H1 (cell line): ENCODE measurements at regions of chr11 and their contacts with region 1.

Region 1: DNA sequence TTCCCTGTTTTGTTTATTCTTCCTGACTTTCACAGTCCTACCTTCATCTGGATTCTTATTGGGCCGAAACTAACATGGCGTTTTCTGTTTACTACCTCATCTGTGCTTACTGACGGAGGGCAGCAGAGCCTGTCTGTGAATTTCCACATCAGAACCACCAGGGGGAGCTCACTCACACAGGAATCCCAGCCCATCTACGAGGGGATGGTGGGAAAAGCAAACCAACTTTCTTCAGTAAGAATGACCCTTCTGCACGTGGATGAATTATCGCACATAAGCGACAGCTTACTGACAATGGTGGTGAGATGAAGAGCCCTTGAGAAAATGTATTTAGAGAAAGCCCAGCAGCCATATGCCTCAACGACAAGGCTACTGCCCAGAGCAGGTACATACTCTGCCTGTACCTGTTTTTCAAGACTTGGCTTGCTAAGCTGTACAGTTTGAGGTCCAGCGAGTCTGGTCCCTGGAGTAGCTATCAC is 42.5 kb downstream of the LARGE2 start:
- DNase-seq: peak; percentile 44 to 70
- H3K4me3 ChIP-seq: no peak overlapping the region
- H3K27ac ChIP-seq: no peak overlapping the region
- H3K4me1 ChIP-seq: peaks cover 0 to 3% (median 0%) of the 10 kb centered on the region in 4 experiments; a peak in 2 of 7 replicates
- H3K27me3 ChIP-seq: no peaks in the 10 kb centered on the region
- CTCF ChIP-seq: peak; percentile 78 to 93 (median 86)
- EP300 ChIP-seq: no peak
- POLR2A ChIP-seq: no peak
- RAD21 ChIP-seq: peak; percentile 88 to 91

Region 2: GRCh38 chr11:45834298-45834756 is 130.6 kb before region 1 on chr11:
- CTCF ChIA-PET with region 1: no interaction called
- POLR2A ChIA-PET with region 1: no interaction called
- DNase-seq: no peak
- H3K4me3 ChIP-seq: no peak overlapping the region
- H3K27ac ChIP-seq: no peak overlapping the region
- H3K4me1 ChIP-seq: no peaks in the 10 kb centered on the region
- H3K27me3 ChIP-seq: no peaks in the 10 kb centered on the region
- CTCF ChIP-seq: no peak
- EP300 ChIP-seq: no peak
- POLR2A ChIP-seq: no peak
- RAD21 ChIP-seq: no peak

Region 3: DNA sequence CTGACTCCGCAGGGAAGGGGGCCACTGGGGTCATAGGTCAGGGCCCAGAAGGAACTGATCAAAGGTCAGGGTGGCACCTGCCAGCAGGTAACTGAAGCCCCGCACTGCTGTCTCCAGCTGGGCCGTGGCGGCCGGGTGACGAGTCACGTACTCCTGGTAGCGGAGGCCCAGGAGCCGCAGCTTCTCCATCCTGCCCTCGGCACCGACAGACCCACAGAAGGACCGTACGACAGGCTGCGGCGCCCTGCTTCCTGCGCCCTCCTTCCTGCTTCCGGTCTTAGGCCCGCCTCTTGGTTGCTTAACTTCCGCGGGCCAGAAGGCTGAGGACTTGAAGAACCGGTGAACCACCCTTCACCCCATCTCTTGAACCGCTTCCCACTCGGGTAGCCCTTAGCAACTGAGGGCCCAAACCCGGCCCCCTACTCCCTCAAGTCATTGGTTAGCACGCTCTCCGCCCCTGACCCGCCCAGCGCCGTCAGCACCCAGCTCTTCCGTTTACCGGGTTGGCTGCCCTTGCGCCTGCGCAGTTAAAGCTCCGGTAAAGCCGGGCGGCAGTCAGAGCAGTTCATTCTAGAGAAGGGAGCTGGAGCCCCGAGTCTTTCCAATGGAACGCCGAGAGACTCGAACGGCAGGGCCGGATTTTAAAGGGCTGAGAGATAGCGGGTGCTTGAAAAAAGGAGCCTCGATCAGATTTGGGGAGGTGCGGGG is 47.2 kb before region 1 on chr11 and contains the start of gene PEX16:
- CTCF ChIA-PET with region 1: interaction called, 14 read pairs
- POLR2A ChIA-PET with region 1: interaction called, 6 read pairs
- DNase-seq: peak; percentile 88 to 93
- H3K4me3 ChIP-seq: peak within 1 kb of the TSS; percentile 84 to 90 (median 88)
- H3K27ac ChIP-seq: peak within 1 kb of the TSS; percentile 64; the same call in 1 of the 2 replicates
- H3K4me1 ChIP-seq: peaks cover 12 to 28% (median 20%) of the 10 kb centered on the region in 4 experiments
- H3K27me3 ChIP-seq: peaks cover 0 to 9% (median 0%) of the 10 kb centered on the region in 4 experiments; a peak in 3 of 7 replicates
- CTCF ChIP-seq: no peak
- EP300 ChIP-seq: peak in 1 of 2 experiments; percentile 5; a peak in 1 of 3 replicates
- POLR2A ChIP-seq: peak in 1 of 2 experiments; percentile 63; a peak in 2 of 3 replicates
- RAD21 ChIP-seq: no peak
- total RNA-seq, gene PEX16: 29.2 and 29.4 TPM in 2 replicates

Region 4: GRCh38 chr11:45939836-45940235 is 25.1 kb before region 1 on chr11:
- CTCF ChIA-PET with region 1: interaction called, 15 read pairs
- POLR2A ChIA-PET with region 1: interaction called, 3 read pairs
- DNase-seq: no peak
- H3K4me3 ChIP-seq: no peak overlapping the region
- H3K27ac ChIP-seq: no peak overlapping the region
- H3K4me1 ChIP-seq: peaks cover 0 to 5% (median 0%) of the 10 kb centered on the region in 4 experiments; a peak in 1 of 7 replicates
- H3K27me3 ChIP-seq: no peaks in the 10 kb centered on the region
- CTCF ChIP-seq: no peak
- EP300 ChIP-seq: no peak
- POLR2A ChIP-seq: no peak
- RAD21 ChIP-seq: no peak

Region 5: DNA sequence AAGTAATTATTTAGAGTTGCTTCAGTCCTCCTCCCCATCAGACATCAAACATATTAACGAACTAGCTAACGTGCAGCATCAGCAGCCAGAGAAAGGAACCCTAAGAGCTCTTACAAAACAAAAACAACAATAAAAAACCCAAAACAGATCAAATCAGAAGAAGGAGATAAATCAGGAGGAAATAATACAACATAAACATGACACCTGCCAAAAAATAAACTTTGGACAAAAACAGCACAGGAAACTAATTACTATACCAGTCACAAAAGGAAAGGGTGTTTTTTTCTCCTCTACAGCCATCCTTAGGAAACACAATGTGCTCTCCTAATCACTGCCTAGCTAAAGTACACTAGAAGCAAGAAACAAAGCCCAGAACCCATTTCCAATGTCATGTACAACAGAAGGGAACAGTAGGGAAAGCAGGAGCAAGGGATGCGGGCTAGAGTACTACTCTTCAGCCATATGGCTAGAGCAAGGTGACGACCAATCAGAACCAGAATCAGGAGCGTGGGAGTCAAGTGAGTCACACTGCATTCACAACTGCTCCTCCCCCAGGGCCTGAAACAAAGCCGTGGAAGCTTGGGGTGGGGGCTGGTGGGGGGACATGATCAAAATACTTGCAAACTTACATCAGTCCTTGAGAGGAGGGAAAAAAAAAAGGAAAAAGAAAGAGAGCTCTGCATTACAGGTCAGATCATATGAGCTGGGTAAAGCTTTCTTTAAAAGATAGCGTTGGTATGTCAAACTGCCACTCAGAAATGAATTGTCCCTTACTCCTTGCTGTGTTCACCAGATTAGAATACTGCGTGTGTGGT is 17.9 kb after region 1 on chr11:
- CTCF ChIA-PET with region 1: interaction called, 101 read pairs
- POLR2A ChIA-PET with region 1: interaction called, 12 read pairs
- DNase-seq: peak; percentile 60 to 84
- H3K4me3 ChIP-seq: peak overlapping the region in 1 of 4 experiments; percentile 40; a peak in 4 of 8 replicates
- H3K27ac ChIP-seq: peak overlapping the region; percentile 58; the same call in 1 of the 2 replicates
- H3K4me1 ChIP-seq: peaks cover 5 to 9% (median 9%) of the 10 kb centered on the region in 4 experiments; a peak in 5 of 7 replicates
- H3K27me3 ChIP-seq: no peaks in the 10 kb centered on the region
- CTCF ChIP-seq: no peak
- EP300 ChIP-seq: no peak
- POLR2A ChIP-seq: no peak
- RAD21 ChIP-seq: no peak

Region 6: GRCh38 chr11:46001448-46001914 is 36.5 kb after region 1 on chr11:
- CTCF ChIA-PET with region 1: interaction called, 107 read pairs
- POLR2A ChIA-PET with region 1: interaction called, 10 read pairs
- DNase-seq: no peak
- H3K4me3 ChIP-seq: peak overlapping the region in 1 of 4 experiments; percentile 40; a peak in 3 of 8 replicates
- H3K27ac ChIP-seq: peak overlapping the region; percentile 87; the same call in 1 of the 2 replicates
- H3K4me1 ChIP-seq: peaks cover 3 to 24% (median 14%) of the 10 kb centered on the region in 4 experiments; a peak in 6 of 7 replicates
- H3K27me3 ChIP-seq: no peaks in the 10 kb centered on the region
- CTCF ChIP-seq: no peak
- EP300 ChIP-seq: peak in 1 of 2 experiments; percentile 87; a peak in 1 of 3 replicates
- POLR2A ChIP-seq: no peak
- RAD21 ChIP-seq: no peak

Region 7: DNA sequence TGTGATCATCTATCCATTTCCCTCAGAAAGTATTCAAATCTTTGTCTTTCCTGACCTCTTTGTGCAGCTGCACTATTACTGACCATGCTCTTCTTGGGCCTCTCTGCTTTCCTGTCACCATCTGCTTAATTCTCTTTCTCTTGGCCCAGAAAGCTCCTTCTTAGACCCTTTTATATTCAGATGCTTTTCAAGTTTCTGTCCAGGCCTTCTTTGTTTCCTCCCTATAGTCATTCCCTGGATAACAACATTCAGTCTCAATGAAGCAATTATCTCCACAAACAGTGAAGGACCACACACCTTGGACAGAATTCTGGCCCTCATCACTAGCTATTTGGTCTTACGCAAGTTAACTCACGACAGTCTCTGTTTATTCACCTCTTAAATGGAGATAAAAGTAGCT is 47.2 kb after region 1 on chr11:
- CTCF ChIA-PET with region 1: interaction called, 107 read pairs
- POLR2A ChIA-PET with region 1: interaction called, 6 read pairs
- DNase-seq: no peak
- H3K4me3 ChIP-seq: 0 out of 8 replicates have a peak overlapping the region, but pooled peaks of 1 of the 4 experiments have one; percentile 4
- H3K27ac ChIP-seq: peak overlapping the region; percentile 62; the same call in 1 of the 2 replicates
- H3K4me1 ChIP-seq: peaks cover 0 to 11% (median 3%) of the 10 kb centered on the region in 4 experiments; a peak in 2 of 7 replicates
- H3K27me3 ChIP-seq: no peaks in the 10 kb centered on the region
- CTCF ChIP-seq: no peak
- EP300 ChIP-seq: peak in 1 of 2 experiments; percentile 33; a peak in 1 of 3 replicates
- POLR2A ChIP-seq: no peak
- RAD21 ChIP-seq: no peak

Region 8: GRCh38 chr11:46134540-46134939 is 169.6 kb after region 1 on chr11:
- CTCF ChIA-PET with region 1: interaction called, 13 read pairs
- POLR2A ChIA-PET with region 1: no interaction called
- DNase-seq: no peak
- H3K4me3 ChIP-seq: no peak overlapping the region
- H3K27ac ChIP-seq: no peak overlapping the region
- H3K4me1 ChIP-seq: peaks cover 0 to 2% (median 0%) of the 10 kb centered on the region in 4 experiments; a peak in 1 of 7 replicates
- H3K27me3 ChIP-seq: no peaks in the 10 kb centered on the region
- CTCF ChIP-seq: peak in 2 of 3 experiments; percentile 49 to 53; a peak in 3 of 4 replicates
- EP300 ChIP-seq: no peak
- POLR2A ChIP-seq: no peak
- RAD21 ChIP-seq: peak; percentile 40 to 57